ENCODE measurements at regions of chr5 and their contacts with region 1.

Region 1: GRCh38 chr5:157342822-157343402 is 77.0 kb downstream of the CYFIP2 start:
- DNase-seq: no peak
- H3K4me3 ChIP-seq: no peak overlapping the region
- H3K27me3 ChIP-seq: no peaks in the 10 kb centered on the region
- CTCF ChIP-seq: peak; percentile 56

Region 2: GRCh38 chr5:157294407-157295091 is 48.4 kb before region 1 on chr5:
- CTCF ChIA-PET with region 1: no interaction called
- POLR2A ChIA-PET with region 1: no interaction called
- DNase-seq: no peak
- H3K4me3 ChIP-seq: no peak overlapping the region
- H3K27me3 ChIP-seq: no peaks in the 10 kb centered on the region
- CTCF ChIP-seq: no peak

Region 3: DNA sequence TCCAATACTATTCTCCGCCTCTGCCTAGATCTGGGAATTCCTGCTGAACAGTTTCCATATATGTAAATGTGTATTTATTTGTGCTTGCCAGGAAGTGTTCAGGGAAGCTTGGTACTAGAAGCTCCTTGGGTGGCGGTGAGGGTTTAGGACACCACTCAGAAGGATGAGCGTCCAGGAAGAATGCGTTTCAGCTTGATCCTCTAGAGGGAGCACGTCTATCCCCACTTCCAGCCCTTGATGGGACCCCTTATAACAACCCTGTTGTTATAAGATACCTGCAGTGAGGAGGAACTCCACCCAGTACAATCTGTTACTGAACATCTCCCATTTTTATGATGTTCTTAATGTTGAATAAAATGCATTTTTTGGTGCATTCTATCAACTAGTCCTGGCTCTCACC is 11.9 kb after region 1 on chr5:
- CTCF ChIA-PET with region 1: interaction called, 20 read pairs
- POLR2A ChIA-PET with region 1: no interaction called
- DNase-seq: no peak
- H3K4me3 ChIP-seq: no peak overlapping the region
- H3K27me3 ChIP-seq: no peaks in the 10 kb centered on the region
- CTCF ChIP-seq: peak; percentile 45

Region 4: DNA sequence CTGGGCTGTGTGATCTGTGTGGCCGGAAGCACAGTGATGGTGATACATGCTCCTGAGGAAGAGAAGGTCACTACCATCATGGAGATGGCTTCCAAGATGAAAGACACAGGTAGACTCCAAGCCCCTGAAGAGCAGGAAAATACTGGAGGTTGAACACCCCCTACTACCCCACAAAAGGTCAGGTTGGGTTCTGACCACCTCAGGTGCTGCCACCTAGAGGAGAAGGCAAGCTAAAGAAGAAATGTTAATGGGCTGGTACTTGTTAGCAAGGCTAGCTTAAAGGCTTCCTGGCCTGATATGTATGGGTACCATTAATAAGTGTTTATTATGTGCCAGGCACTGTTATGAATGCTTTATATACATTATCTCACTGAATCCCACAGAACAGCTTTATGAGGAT is 128.8 kb after region 1 on chr5:
- CTCF ChIA-PET with region 1: interaction called, 13 read pairs
- POLR2A ChIA-PET with region 1: no interaction called
- DNase-seq: no peak
- H3K4me3 ChIP-seq: no peak overlapping the region
- H3K27me3 ChIP-seq: no peaks in the 10 kb centered on the region
- CTCF ChIP-seq: peak; percentile 62

Region 5: DNA sequence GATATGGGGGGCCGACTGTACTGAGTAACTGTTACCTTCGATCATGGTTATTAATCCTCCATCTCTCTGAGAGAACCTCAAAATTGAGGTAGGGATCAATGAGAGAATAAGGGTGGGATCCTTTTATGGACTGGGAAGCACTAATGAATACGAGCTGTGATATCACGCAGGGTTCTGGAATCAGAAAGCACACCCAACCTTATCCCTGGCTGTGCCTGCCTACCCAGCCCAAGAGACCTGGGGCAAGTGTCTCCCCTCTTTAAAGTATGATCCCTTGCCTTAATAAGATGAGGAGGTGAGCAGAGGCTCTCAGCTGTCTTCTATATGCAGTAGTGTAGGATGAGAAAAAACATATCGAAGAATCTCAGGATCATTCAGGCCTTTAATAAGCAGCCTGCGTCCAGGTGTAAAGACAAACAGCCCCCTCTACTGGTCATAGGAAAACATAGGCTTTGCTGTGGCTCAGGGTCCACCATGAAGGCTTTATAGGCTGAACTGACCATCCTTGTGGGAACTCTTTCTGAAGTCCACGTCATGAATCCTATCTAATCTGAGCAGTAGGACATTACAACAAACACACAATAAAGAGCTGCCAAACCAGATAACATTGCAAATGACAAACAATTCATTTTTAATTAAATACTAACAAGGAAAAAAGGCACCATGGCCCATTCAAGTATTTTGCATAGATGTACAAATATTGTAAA is 133.9 kb after region 1 on chr5:
- CTCF ChIA-PET with region 1: interaction called, 13 read pairs
- POLR2A ChIA-PET with region 1: no interaction called
- DNase-seq: peak; percentile 11
- H3K4me3 ChIP-seq: no peak overlapping the region
- H3K27me3 ChIP-seq: no peaks in the 10 kb centered on the region
- CTCF ChIP-seq: peak; percentile 85

Region 6: GRCh38 chr5:157917899-157918809 is 575.2 kb after region 1 on chr5:
- CTCF ChIA-PET with region 1: no interaction called
- POLR2A ChIA-PET with region 1: no interaction called
- DNase-seq: peak; percentile 30
- H3K4me3 ChIP-seq: no peak overlapping the region
- H3K27me3 ChIP-seq: no peaks in the 10 kb centered on the region
- CTCF ChIP-seq: peak; percentile 60

Measured in BJ (cell line).